ENCODE measurements at regions of chr16 and their contacts with region 1.

Region 1: DNA sequence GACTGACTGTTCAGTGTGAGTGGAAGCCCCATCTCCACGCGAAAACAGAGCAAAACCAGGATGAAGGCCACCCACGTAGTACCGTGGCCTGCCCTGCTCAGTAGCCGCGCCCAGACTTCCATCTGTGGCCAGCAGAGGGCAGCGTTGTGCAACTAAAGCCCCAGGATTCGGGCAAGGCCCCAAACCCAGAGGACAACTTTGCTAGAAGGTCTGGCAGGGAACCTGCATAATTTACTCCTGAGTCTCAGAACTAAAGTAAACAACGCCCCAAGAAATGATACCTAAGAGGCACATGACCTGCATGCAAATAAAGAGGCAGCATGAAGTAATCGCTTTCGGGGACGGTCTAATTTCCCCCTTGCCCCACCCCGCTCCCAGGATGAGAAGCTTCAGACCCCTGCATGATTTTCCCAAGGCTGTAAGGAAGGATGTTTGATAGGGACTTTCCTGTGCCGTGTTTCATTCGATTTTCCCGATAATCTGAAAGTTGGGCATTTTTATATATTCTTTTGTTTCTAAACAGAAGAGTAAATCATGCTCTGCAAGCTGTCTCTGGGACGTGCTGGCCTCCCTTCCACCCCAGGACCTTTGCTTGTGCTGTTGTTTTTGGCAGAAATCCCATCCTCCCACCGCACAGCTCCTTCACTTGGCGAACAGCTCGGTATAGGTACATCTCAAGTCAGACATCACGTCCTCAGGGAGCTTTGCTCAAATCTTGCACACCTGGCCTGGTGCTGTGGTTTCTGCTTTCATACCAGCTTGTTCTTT is 18.6 kb downstream of the HSBP1 start:
- DNase-seq: peak; percentile 82 to 86
- ATAC-seq: peak; percentile 100
- H3K4me3 ChIP-seq: peak overlapping the region in 1 of 4 donors; percentile 35
- H3K27ac ChIP-seq: peak overlapping the region; percentile 6 to 54 (median 44)
- H3K4me1 ChIP-seq: peaks cover 0 to 5% of the 10 kb centered on the region in 2 donors
- H3K27me3 ChIP-seq: no peaks in the 10 kb centered on the region
- CTCF ChIP-seq: peak; percentile 89 to 94 (median 93)
- POLR2A ChIP-seq: no peak

Region 2: DNA sequence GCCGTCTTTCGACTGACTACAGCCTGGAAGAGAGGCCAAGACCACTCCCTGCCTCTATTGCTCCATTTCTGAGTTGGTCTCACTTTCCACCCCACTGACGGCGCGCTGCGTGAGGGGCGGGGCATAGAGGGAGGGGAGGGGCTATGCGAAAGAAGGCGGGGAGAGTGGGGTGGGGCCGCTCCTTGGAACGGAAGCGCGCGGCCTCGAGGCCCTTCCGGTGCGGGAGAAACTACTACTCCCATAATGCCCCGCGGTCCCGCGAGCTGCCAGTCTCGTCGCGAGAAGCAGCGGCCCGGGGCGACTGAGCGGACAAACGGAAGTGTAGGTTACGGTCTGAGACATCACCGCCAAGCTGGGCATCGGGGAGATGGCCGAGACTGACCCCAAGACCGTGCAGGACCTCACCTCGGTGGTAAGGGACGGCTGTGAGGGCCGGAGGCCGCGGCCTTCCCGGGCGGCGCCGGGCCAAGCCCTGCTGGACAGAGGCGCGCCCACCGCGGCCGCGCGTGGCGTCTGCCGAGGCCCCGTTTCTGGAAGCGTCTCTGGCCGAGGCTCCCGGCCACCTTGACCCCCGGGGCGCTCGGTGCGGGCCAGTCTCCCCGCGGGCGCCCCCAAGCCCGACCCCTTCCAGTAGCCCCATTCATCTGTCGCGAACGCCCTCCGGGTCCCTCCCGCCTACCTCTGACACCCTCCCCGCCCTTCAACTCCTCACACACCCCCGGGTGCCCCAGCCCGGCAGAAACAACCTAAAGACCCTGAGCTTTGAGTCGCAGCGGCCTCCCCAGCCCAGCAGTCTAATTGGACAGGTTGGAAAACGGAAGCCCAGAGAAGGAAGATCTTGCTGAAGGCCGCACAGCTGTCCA is 18.4 kb before region 1 on chr16 and contains the start of gene HSBP1:
- in situ Hi-C with region 1: no loop called
- intact Hi-C with region 1: no loop called
- DNase-seq: peak; percentile 89 to 94
- ATAC-seq: peak; percentile 96
- H3K4me3 ChIP-seq: peak within 1 kb of the TSS; percentile 85 to 96 (median 90)
- H3K27ac ChIP-seq: peak within 1 kb of the TSS; percentile 73 to 86 (median 84)
- H3K4me1 ChIP-seq: peaks cover 10 to 17% of the 10 kb centered on the region in 2 donors
- H3K27me3 ChIP-seq: no peaks in the 10 kb centered on the region
- CTCF ChIP-seq: peak in 2 of 5 experiments; percentile 13 to 20
- POLR2A ChIP-seq: peak; percentile 68
- total RNA-seq, gene HSBP1: 7.5 to 28.0 (median 8.7) TPM

Region 3: GRCh38 chr16:83878838-83879237 is 52.5 kb after region 1 on chr16:
- in situ Hi-C with region 1: loop called in 1 of 4 experiments (anchors 5 kb)
- intact Hi-C with region 1: loop called (anchors 2 kb)
- DNase-seq: no peak
- ATAC-seq: no peak
- H3K4me3 ChIP-seq: no peak overlapping the region
- H3K27ac ChIP-seq: no peak overlapping the region
- H3K4me1 ChIP-seq: no peaks in the 10 kb centered on the region
- H3K27me3 ChIP-seq: no peaks in the 10 kb centered on the region
- CTCF ChIP-seq: peak in 3 of 5 experiments; percentile 35 to 40 (median 35)
- POLR2A ChIP-seq: no peak

Region 4: GRCh38 chr16:83887081-83887480 is 60.8 kb after region 1 on chr16:
- in situ Hi-C with region 1: loop called in 2 of 4 experiments (anchors 5 kb)
- intact Hi-C with region 1: no loop called
- DNase-seq: no peak
- ATAC-seq: no peak
- H3K4me3 ChIP-seq: no peak overlapping the region
- H3K27ac ChIP-seq: no peak overlapping the region
- H3K4me1 ChIP-seq: peaks cover 6 to 7% of the 10 kb centered on the region in 2 donors
- H3K27me3 ChIP-seq: no peaks in the 10 kb centered on the region
- CTCF ChIP-seq: peak in 1 of 5 experiments; percentile 23
- POLR2A ChIP-seq: no peak

Region 5: GRCh38 chr16:83898463-83899271 is 72.3 kb after region 1 on chr16 and contains the start of gene MLYCD:
- in situ Hi-C with region 1: no loop called
- intact Hi-C with region 1: loop called (anchors 5 kb)
- DNase-seq: peak; percentile 88 to 93
- ATAC-seq: peak; percentile 70 to 72
- H3K4me3 ChIP-seq: peak within 1 kb of the TSS; percentile 63 to 88 (median 68)
- H3K27ac ChIP-seq: peak within 1 kb of the TSS; percentile 91 to 97 (median 94)
- H3K4me1 ChIP-seq: peaks cover 39 to 47% of the 10 kb centered on the region in 2 donors
- H3K27me3 ChIP-seq: no peaks in the 10 kb centered on the region
- CTCF ChIP-seq: peak in 1 of 5 experiments; percentile 27
- POLR2A ChIP-seq: peak; percentile 94 to 97
- total RNA-seq, gene MLYCD: 10.3 to 20.8 (median 18.4) TPM

Region 6: DNA sequence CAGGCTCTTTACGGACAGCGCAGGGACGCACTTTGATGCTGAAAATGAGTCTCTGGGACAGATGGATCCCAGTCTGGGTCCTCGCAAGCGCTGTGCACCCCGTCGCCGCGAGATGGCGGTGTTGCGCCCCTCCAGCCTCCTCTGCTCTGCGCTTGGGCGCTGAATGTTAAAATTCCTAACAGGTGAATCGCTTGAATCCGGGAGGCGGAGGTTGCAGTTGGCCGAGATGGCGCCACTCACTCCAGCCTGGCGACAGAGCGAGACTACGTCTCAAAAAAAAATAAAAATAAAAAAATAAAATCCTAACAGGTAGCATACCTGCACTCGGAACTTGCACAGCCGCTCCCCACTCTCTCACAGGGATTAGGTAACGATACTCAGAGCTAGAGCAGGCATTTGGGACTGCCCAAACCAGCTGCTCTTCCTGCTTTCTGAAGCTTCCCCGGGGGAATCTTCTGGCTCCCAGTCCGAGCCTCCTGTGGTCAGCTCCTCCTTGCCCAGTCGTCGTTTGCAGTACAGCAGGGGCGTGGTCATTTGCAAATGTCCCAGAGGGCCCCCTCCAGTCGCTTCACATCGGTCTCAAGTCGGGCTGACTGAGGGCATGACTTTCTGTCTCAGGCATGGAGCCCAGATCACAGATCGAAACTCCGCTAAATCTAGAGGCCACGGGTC is 100.5 kb after region 1 on chr16:
- in situ Hi-C with region 1: no loop called
- intact Hi-C with region 1: loop called (anchors 2 kb)
- DNase-seq: peak; percentile 42 to 64
- ATAC-seq: peak; percentile 83 to 86
- H3K4me3 ChIP-seq: no peak overlapping the region
- H3K27ac ChIP-seq: no peak overlapping the region
- H3K4me1 ChIP-seq: peaks cover 8 to 10% of the 10 kb centered on the region in 2 donors
- H3K27me3 ChIP-seq: no peaks in the 10 kb centered on the region
- CTCF ChIP-seq: peak; percentile 75 to 98 (median 92)
- POLR2A ChIP-seq: no peak

Region 7: GRCh38 chr16:84062734-84063640 is 236.7 kb after region 1 on chr16:
- in situ Hi-C with region 1: loop called in 3 of 4 experiments (anchors 5 to 10 kb)
- intact Hi-C with region 1: loop called (anchors 1 kb)
- DNase-seq: peak; percentile 22 to 67
- ATAC-seq: peak; percentile 76 to 78
- H3K4me3 ChIP-seq: no peak overlapping the region
- H3K27ac ChIP-seq: no peak overlapping the region
- H3K4me1 ChIP-seq: no peaks in the 10 kb centered on the region
- H3K27me3 ChIP-seq: no peaks in the 10 kb centered on the region
- CTCF ChIP-seq: peak; percentile 74 to 89 (median 83)
- POLR2A ChIP-seq: no peak

Region 8: DNA sequence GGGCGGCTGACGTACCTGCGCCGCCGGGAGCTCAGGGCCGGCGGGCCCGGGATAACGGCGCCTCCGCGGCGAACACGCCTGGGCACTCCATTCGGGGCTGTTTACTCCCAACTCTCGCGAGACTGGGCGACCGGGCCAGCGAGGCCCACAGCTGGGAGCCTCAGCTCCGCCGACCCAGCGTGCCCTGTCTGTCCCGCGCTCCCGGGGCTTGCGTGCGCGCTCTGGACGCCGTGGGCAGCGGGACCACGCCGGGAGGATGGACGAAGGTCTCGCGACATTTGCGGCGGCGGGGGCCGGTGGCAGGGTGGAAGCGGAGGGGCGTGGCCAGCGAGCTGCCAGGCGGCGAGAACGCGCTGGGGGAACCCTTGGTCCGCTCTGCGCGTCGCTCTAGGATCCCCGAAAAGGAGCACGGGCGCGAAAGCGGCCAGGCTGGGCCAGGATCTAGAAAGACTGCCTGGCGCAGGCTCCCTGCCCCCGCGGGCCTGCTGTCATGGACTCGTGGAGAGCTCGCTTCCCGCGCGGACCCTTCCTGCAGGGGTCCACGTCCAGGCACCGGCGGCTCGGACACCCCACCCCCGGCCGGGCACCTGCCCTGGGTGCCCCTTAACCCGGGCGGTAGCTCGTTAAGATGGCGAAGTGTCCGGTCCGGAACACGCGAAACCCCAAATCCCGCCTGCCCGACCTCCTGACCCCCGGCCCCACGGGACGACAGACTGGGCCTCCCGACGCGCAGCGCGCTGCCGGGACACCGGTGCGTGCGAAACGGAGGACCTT is 290.6 kb after region 1 on chr16 and contains the start of gene MBTPS1:
- in situ Hi-C with region 1: no loop called
- intact Hi-C with region 1: loop called (anchors 1 kb)
- DNase-seq: peak; percentile 96 to 97
- ATAC-seq: peak; percentile 93
- H3K4me3 ChIP-seq: peak within 1 kb of the TSS; percentile 90 to 99 (median 96)
- H3K27ac ChIP-seq: peak within 1 kb of the TSS; percentile 90 to 94 (median 92)
- H3K4me1 ChIP-seq: peaks cover 28 to 38% of the 10 kb centered on the region in 2 donors
- H3K27me3 ChIP-seq: no peaks in the 10 kb centered on the region
- CTCF ChIP-seq: peak in 2 of 5 experiments; percentile 69 to 74
- POLR2A ChIP-seq: peak; percentile 86 to 88
- total RNA-seq, gene MBTPS1: 28.8 to 44.3 (median 38.5) TPM

Measured in gastrocnemius medialis (tissue), 4 donors.